CD4-positive, alpha-beta memory T cell (primary cell): ENCODE measurements at regions of chr19 and their contacts with region 1.

Region 1: DNA sequence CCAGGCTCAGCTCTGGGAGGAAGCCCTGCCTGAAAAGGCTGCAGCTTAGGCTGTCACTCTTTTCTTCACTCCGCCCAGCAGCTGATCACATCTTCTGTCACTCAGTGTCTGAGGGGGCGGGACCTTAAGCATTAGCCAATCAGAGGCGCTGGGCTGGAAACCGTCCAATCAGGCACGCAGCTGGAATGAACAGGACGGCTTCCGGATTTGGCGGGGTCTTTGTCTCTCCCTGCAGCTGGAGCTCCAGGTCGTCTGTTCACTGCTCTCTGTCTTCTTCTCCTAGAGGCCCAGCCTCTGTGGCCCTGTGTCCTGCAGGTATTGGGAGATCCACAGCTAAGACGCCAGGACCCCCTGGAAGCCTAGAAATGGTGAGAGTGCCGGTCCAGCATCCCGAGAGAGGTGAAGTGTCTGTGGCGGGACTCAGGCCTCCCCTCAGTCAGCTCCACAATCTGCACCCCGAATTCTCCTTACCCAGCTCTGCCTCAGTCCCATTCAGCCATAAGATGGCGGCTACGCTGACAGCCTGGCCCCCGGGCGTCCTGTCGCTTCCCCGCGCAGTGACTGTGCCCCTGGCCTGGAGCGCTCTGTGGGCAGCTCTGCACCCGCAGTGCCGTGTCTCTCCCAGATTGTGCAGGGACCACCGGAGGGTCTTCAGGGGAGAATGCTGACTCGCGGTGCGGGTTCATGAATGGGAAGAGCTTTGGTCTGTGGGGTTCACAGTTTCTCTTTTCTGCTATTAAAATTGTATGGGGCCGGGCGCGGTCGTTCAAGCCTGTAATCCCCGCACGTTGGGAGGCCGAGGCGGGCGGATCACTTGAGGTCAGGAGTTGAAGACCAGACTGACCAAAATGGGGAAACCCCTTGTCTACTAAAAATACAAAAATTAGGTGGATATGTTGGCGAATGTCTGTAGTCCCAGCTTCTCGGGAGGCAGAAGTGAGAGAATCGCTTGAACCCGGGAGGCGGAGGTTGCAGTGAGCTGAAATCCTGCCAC is at the start of gene ZNF66:
- DNase-seq: peak; percentile 93 to 96 (median 95)
- H3K4me3 ChIP-seq: peak within 1 kb of the TSS; percentile 79 to 85
- H3K4me3 Mint-ChIP-seq: peak within 1 kb of the TSS; percentile 94 to 100 (median 99)
- H3K27ac ChIP-seq: peak within 1 kb of the TSS; percentile 74
- H3K27ac Mint-ChIP-seq: peak within 1 kb of the TSS; percentile 87 to 99 (median 98)
- H3K4me1 ChIP-seq: peaks cover 6% of the 10 kb centered on the region
- H3K4me1 Mint-ChIP-seq: peaks cover 13 to 37% (median 20%) of the 10 kb centered on the region in 4 donors
- H3K27me3 ChIP-seq: no peaks in the 10 kb centered on the region
- H3K27me3 Mint-ChIP-seq: no peaks in the 10 kb centered on the region
- total RNA-seq, gene ZNF66: 14.7 to 17.1 TPM

Region 2: GRCh38 chr19:20565321-20566018 is 210.9 kb before region 1 on chr19 and contains the start of gene ZNF737:
- CTCF ChIA-PET with region 1: no interaction called
- POLR2A ChIA-PET with region 1: interaction called, 41 read pairs
- intact Hi-C with region 1: loop called (anchors 2 kb)
- DNase-seq: peak; percentile 91 to 95 (median 93)
- H3K4me3 ChIP-seq: peak within 1 kb of the TSS; percentile 57 to 95
- H3K4me3 Mint-ChIP-seq: peak within 1 kb of the TSS; percentile 99 to 100 (median 99)
- H3K27ac ChIP-seq: peak within 1 kb of the TSS; percentile 73
- H3K27ac Mint-ChIP-seq: peak within 1 kb of the TSS; percentile 97 to 99 (median 98)
- H3K4me1 ChIP-seq: no peaks in the 10 kb centered on the region
- H3K4me1 Mint-ChIP-seq: peaks cover 12 to 43% (median 29%) of the 10 kb centered on the region in 4 donors
- H3K27me3 ChIP-seq: no peaks in the 10 kb centered on the region
- H3K27me3 Mint-ChIP-seq: no peaks in the 10 kb centered on the region
- total RNA-seq, gene ZNF737: 41.3 to 44.7 TPM

Region 3: GRCh38 chr19:20661150-20661819 is 115.1 kb before region 1 on chr19 and contains the start of gene ZNF626:
- CTCF ChIA-PET with region 1: interaction called, 5 read pairs
- POLR2A ChIA-PET with region 1: interaction called, 24 read pairs
- intact Hi-C with region 1: loop called (anchors 1 kb)
- DNase-seq: peak; percentile 88 to 95 (median 92)
- H3K4me3 ChIP-seq: peak within 1 kb of the TSS; percentile 36 to 60
- H3K4me3 Mint-ChIP-seq: peak within 1 kb of the TSS; percentile 90 to 98 (median 97)
- H3K27ac ChIP-seq: peak within 1 kb of the TSS; percentile 81
- H3K27ac Mint-ChIP-seq: peak within 1 kb of the TSS; percentile 91 to 98 (median 97)
- H3K4me1 ChIP-seq: peaks cover 12% of the 10 kb centered on the region
- H3K4me1 Mint-ChIP-seq: peaks cover 20 to 73% (median 46%) of the 10 kb centered on the region in 4 donors
- H3K27me3 ChIP-seq: no peaks in the 10 kb centered on the region
- H3K27me3 Mint-ChIP-seq: no peaks in the 10 kb centered on the region
- total RNA-seq, gene ZNF626: 18.6 to 19.8 TPM

Region 4: DNA sequence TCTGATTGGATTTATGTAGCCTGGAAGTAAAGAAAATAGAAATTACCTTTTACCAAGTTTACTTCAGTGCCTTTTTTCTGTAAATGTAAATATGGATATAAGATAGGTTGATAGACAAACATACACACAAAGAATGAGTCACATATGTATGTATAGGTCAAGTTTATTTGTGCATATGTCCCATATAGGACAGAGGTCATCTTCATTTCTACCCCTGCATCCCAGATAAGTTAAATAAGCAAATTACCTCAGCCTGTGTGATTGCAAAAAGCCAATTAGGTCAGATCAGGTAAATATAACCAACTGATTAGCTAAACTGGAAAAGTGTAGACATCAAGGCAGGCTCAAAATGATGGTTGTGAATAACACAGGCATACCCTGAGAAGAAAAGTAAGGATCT is 49.6 kb before region 1 on chr19:
- CTCF ChIA-PET with region 1: no interaction called
- POLR2A ChIA-PET with region 1: no interaction called
- intact Hi-C with region 1: no loop called
- DNase-seq: no peak
- H3K4me3 ChIP-seq: no peak overlapping the region
- H3K4me3 Mint-ChIP-seq: no peak overlapping the region
- H3K27ac ChIP-seq: no peak overlapping the region
- H3K27ac Mint-ChIP-seq: no peak overlapping the region
- H3K4me1 ChIP-seq: no peaks in the 10 kb centered on the region
- H3K4me1 Mint-ChIP-seq: no peaks in the 10 kb centered on the region
- H3K27me3 ChIP-seq: no peaks in the 10 kb centered on the region
- H3K27me3 Mint-ChIP-seq: peaks cover 0 to 1% of the 10 kb centered on the region in 2 donors

Region 5: GRCh38 chr19:20840371-20840770 is 64.0 kb after region 1 on chr19:
- CTCF ChIA-PET with region 1: no interaction called
- POLR2A ChIA-PET with region 1: no interaction called
- intact Hi-C with region 1: no loop called
- DNase-seq: no peak
- H3K4me3 ChIP-seq: no peak overlapping the region
- H3K4me3 Mint-ChIP-seq: peak overlapping the region in 1 of 8 donors; percentile 17
- H3K27ac ChIP-seq: no peak overlapping the region
- H3K27ac Mint-ChIP-seq: no peak overlapping the region
- H3K4me1 ChIP-seq: no peaks in the 10 kb centered on the region
- H3K4me1 Mint-ChIP-seq: no peaks in the 10 kb centered on the region
- H3K27me3 ChIP-seq: no peaks in the 10 kb centered on the region
- H3K27me3 Mint-ChIP-seq: no peaks in the 10 kb centered on the region

Region 6: GRCh38 chr19:20879501-20879900 is 103.1 kb after region 1 on chr19:
- CTCF ChIA-PET with region 1: no interaction called
- POLR2A ChIA-PET with region 1: no interaction called
- intact Hi-C with region 1: no loop called
- DNase-seq: no peak
- H3K4me3 ChIP-seq: no peak overlapping the region
- H3K4me3 Mint-ChIP-seq: no peak overlapping the region
- H3K27ac ChIP-seq: no peak overlapping the region
- H3K27ac Mint-ChIP-seq: no peak overlapping the region
- H3K4me1 ChIP-seq: no peaks in the 10 kb centered on the region
- H3K4me1 Mint-ChIP-seq: peaks cover 0 to 7% (median 1%) of the 10 kb centered on the region in 4 donors
- H3K27me3 ChIP-seq: no peaks in the 10 kb centered on the region
- H3K27me3 Mint-ChIP-seq: peaks cover 7 to 29% of the 10 kb centered on the region in 2 donors

Region 7: DNA sequence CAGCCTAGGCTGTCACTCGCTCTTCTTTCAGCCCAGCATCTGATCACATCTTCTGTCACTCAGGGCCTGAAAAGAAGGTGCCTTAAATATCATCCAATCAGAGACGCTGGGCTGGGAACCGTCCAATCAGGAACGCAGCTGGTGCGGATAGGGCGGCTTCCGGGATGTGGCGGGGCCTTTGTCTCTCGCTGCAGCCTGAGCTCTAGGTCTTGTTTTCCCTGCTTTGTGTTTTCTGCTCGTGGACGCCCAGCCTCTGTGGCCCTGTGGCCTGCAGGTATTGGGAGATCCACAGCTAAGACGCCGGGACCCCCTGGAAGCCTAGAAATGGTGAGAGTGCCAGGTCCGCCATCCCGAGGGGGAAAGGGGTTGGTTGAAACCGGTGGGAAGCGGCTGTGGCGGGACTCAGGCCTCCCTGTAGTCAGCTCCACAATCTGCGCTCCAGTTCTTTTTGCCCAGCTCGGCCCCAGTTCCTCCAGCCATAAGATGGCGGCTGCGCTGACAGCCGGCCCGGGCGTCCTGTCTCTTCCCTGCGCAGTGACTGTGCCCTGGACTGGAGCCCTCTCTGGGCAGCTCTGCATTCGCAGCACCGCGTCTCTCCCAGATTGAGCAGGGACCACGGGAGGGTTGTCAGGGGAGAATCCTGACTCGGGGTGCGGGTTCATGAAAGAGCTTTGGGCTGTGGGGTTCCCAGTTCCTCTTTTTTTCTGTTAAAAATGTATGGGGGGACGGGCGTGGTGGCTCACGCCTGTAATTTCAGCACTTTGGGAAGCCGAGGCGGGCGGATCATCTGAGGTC is 146.9 kb after region 1 on chr19 and contains the start of gene ZNF85:
- CTCF ChIA-PET with region 1: interaction called, 3 read pairs
- POLR2A ChIA-PET with region 1: interaction called, 12 read pairs
- intact Hi-C with region 1: loop called (anchors 1 kb)
- DNase-seq: peak; percentile 90 to 94 (median 91)
- H3K4me3 ChIP-seq: peak within 1 kb of the TSS; percentile 63 to 81
- H3K4me3 Mint-ChIP-seq: peak within 1 kb of the TSS; percentile 94 to 98 (median 96)
- H3K27ac ChIP-seq: peak within 1 kb of the TSS; percentile 62
- H3K27ac Mint-ChIP-seq: peak within 1 kb of the TSS; percentile 86 to 97 (median 96)
- H3K4me1 ChIP-seq: peaks cover 4% of the 10 kb centered on the region
- H3K4me1 Mint-ChIP-seq: peaks cover 5 to 14% (median 10%) of the 10 kb centered on the region in 4 donors
- H3K27me3 ChIP-seq: no peaks in the 10 kb centered on the region
- H3K27me3 Mint-ChIP-seq: no peaks in the 10 kb centered on the region
- total RNA-seq, gene ZNF85: 6.5 to 7.6 TPM

Region 8: GRCh38 chr19:20999731-21000352 is 223.5 kb after region 1 on chr19:
- CTCF ChIA-PET with region 1: no interaction called
- POLR2A ChIA-PET with region 1: no interaction called
- intact Hi-C with region 1: loop called (anchors 1 kb)
- DNase-seq: peak; percentile 85 to 93 (median 91)
- H3K4me3 ChIP-seq: peak overlapping the region; percentile 47 to 66
- H3K4me3 Mint-ChIP-seq: peak overlapping the region; percentile 84 to 91 (median 86)
- H3K27ac ChIP-seq: no peak overlapping the region
- H3K27ac Mint-ChIP-seq: peak overlapping the region; percentile 41 to 77 (median 55)
- H3K4me1 ChIP-seq: peaks cover 5% of the 10 kb centered on the region
- H3K4me1 Mint-ChIP-seq: peaks cover 0 to 8% (median 5%) of the 10 kb centered on the region in 4 donors
- H3K27me3 ChIP-seq: no peaks in the 10 kb centered on the region
- H3K27me3 Mint-ChIP-seq: no peaks in the 10 kb centered on the region

Region 9: GRCh38 chr19:21141787-21142464 is 365.5 kb after region 1 on chr19 and contains the start of gene ZNF431:
- CTCF ChIA-PET with region 1: no interaction called
- POLR2A ChIA-PET with region 1: interaction called, 4 read pairs
- intact Hi-C with region 1: loop called (anchors 1 kb)
- DNase-seq: peak; percentile 89 to 93 (median 90)
- H3K4me3 ChIP-seq: peak within 1 kb of the TSS; percentile 71 to 94
- H3K4me3 Mint-ChIP-seq: peak within 1 kb of the TSS; percentile 96 to 99 (median 98)
- H3K27ac ChIP-seq: peak within 1 kb of the TSS; percentile 74
- H3K27ac Mint-ChIP-seq: peak within 1 kb of the TSS; percentile 91 to 99 (median 97)
- H3K4me1 ChIP-seq: peaks cover 21% of the 10 kb centered on the region
- H3K4me1 Mint-ChIP-seq: peaks cover 24 to 59% (median 40%) of the 10 kb centered on the region in 4 donors
- H3K27me3 ChIP-seq: no peaks in the 10 kb centered on the region
- H3K27me3 Mint-ChIP-seq: no peaks in the 10 kb centered on the region
- total RNA-seq, gene ZNF431: 32.1 to 34.4 TPM

Region 10: GRCh38 chr19:21269813-21270212 is 493.4 kb after region 1 on chr19:
- CTCF ChIA-PET with region 1: no interaction called
- POLR2A ChIA-PET with region 1: no interaction called
- intact Hi-C with region 1: no loop called
- DNase-seq: no peak
- H3K4me3 ChIP-seq: no peak overlapping the region
- H3K4me3 Mint-ChIP-seq: no peak overlapping the region
- H3K27ac ChIP-seq: no peak overlapping the region
- H3K27ac Mint-ChIP-seq: no peak overlapping the region
- H3K4me1 ChIP-seq: no peaks in the 10 kb centered on the region
- H3K4me1 Mint-ChIP-seq: no peaks in the 10 kb centered on the region
- H3K27me3 ChIP-seq: no peaks in the 10 kb centered on the region
- H3K27me3 Mint-ChIP-seq: no peaks in the 10 kb centered on the region